Activated CD4-positive, alpha-beta T cell treated with anti-CD3 and anti-CD28 coated beads, Interleukin-2, amount 10 ng/mL, durations not matched to agents 7 days and 5 days (primary cell): ENCODE measurements at regions of chr2 and their contacts with region 1.

Region 1: DNA sequence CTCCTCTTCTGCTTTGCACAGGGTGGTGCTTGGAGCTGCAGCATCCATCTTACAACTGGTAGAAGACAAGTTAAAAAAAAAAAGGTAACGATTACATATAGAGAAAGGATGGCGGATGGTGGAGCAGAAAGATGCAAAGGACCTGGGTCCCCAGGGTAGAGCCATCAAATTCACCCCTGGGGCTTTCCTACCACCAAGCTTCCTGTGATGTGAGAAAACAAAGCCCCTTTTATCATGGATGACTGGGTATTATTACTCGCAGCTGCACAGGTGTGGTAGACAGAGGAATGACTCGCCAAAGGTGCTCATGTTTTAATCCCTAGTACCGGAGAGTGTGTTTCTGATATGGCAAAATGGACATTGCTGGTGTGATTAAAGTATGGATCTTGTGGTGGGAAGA is 1.3 kb upstream of the ACOXL start:
- DNase-seq: no peak
- H3K4me3 Mint-ChIP-seq: no peak overlapping the region
- H3K27ac Mint-ChIP-seq: no peak overlapping the region
- H3K4me1 Mint-ChIP-seq: peaks cover 14% of the 10 kb centered on the region
- H3K27me3 Mint-ChIP-seq: peaks cover 73% of the 10 kb centered on the region

Region 2: DNA sequence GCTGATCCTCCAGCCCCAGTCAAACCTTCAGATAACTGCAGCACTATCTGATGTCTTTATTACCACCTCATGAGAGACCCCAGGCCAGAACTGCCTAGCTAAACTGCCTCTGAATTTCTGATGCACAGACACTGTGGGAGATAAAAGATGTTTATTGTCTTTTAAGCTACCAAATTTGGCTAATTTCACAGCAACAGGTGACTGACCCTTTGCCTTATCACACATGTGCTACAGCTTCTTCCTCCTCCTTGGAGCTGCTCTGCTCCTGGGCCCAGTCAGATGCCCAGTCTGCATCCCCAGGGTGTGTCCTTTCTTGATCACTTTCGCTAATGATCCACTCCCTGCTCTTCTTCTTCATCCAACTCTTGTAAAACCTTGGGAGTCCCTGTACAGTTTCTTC is 18.3 kb before region 1 on chr2:
- CTCF ChIA-PET with region 1: interaction called, 10 read pairs
- POLR2A ChIA-PET with region 1: no interaction called
- DNase-seq: no peak
- H3K4me3 Mint-ChIP-seq: no peak overlapping the region
- H3K27ac Mint-ChIP-seq: no peak overlapping the region
- H3K4me1 Mint-ChIP-seq: no peaks in the 10 kb centered on the region
- H3K27me3 Mint-ChIP-seq: peaks cover 58% of the 10 kb centered on the region

Region 3: DNA sequence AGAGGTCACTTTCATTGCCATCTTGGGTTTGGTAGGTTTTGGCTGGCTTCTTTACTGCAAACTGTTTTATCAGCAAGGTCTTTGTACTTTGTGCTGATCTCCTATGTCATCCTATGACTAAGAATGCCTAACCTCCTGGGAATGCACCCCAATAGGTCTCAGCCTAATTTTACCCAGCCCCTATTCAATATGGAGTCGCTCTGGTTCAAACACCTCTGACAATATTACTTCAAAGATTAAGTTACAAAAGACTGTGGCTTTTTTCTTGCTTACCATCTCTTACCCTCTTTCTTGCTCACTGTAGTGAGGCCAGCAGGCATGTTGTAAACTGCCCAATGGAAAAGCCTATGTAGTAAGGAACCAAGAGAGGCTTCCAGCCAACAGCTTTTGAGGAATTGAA is 1720.3 kb after region 1 on chr2:
- CTCF ChIA-PET with region 1: no interaction called
- POLR2A ChIA-PET with region 1: no interaction called
- DNase-seq: no peak
- H3K4me3 Mint-ChIP-seq: no peak overlapping the region
- H3K27ac Mint-ChIP-seq: no peak overlapping the region
- H3K4me1 Mint-ChIP-seq: no peaks in the 10 kb centered on the region
- H3K27me3 Mint-ChIP-seq: peaks cover 3% of the 10 kb centered on the region